Posterior vena cava (tissue), 2 donors: ENCODE measurements at regions of chr16 and their contacts with region 1.

Region 1: DNA sequence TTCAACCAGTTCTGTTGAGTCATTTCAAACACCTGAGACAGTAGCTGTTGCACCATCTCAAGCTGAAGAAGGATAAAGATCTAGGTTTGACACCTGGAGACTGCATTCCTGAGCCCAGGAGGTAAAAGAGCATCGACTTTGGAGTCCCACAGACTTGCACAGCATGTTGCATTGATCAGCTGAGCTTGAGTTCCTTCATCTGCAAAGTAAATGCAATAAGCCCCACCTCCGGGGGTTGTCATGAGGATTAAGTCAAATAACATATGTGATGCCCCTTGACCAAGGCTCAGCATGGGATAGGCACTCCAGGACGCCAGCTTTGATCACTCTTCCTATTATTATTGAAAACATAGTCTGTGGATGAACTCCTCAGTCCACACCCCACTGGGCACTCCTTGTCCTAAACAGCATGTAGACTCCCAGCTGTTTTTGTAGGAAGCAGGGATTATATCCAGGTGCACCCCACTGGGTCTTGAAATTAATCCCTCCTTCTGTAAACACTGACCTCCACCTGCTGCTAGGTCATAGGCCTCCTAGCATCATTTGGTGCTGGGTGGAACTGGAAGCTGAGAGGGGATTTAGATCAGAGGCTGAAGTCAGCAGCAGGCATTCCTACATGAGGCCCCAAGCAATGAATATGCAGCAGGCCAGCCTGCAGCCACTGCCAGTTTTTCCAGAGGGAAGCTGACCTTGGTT is 259.0 kb downstream of the HS3ST4 start:
- DNase-seq: no peak

Region 2: DNA sequence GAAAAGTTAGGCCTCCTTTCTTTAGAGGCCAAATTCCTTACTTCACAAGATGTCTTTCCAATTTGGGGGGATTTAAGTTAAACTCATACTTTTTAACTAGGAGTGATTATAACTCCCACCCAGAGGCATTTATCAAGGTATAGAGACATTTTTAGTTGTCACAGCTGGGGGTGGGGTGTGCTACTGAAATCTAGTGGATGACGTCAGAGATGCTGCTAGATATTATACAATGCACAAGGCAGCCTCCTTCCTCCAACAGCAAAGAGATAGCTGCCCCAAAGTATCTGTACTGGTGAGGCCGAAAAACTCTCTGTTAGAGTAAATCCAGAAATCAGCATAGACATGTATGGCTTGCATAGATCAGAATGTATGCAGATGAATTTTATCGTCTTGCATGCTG is 65.0 kb after region 1 on chr16:
- intact Hi-C with region 1: loop called in 1 of 2 experiments (anchors 2 kb)
- DNase-seq: no peak